Breast epithelium (tissue), 4 donors: ENCODE measurements at regions of chr1 and their contacts with region 1.

Region 1: GRCh38 chr1:150149271-150150132 is at the start of gene PLEKHO1:
- DNase-seq: peak; percentile 71 to 79
- H3K4me3 ChIP-seq: peak within 1 kb of the TSS; percentile 78 to 97 (median 93)
- H3K27ac ChIP-seq: peak within 1 kb of the TSS; percentile 91 to 96
- H3K4me1 ChIP-seq: peaks cover 0 to 5% of the 10 kb centered on the region in 2 donors
- H3K27me3 ChIP-seq: no peaks in the 10 kb centered on the region
- CTCF ChIP-seq: no peak
- POLR2A ChIP-seq: no peak
- total RNA-seq, gene PLEKHO1: 20.8 to 58.0 (median 27.5) TPM

Region 2: GRCh38 chr1:150010393-150011115 is 138.9 kb before region 1 on chr1 and contains the start of gene OTUD7B:
- intact Hi-C with region 1: no loop called
- DNase-seq: peak; percentile 73 to 89
- H3K4me3 ChIP-seq: peak within 1 kb of the TSS; percentile 82 to 91 (median 85)
- H3K27ac ChIP-seq: peak within 1 kb of the TSS; percentile 96 to 98
- H3K4me1 ChIP-seq: peaks cover 0 to 8% of the 10 kb centered on the region in 2 donors
- H3K27me3 ChIP-seq: no peaks in the 10 kb centered on the region
- CTCF ChIP-seq: peak in 2 of 3 donors; percentile 3 to 25
- POLR2A ChIP-seq: peak; percentile 42
- total RNA-seq, gene OTUD7B: 22.0 to 32.8 (median 28.1) TPM

Region 3: DNA sequence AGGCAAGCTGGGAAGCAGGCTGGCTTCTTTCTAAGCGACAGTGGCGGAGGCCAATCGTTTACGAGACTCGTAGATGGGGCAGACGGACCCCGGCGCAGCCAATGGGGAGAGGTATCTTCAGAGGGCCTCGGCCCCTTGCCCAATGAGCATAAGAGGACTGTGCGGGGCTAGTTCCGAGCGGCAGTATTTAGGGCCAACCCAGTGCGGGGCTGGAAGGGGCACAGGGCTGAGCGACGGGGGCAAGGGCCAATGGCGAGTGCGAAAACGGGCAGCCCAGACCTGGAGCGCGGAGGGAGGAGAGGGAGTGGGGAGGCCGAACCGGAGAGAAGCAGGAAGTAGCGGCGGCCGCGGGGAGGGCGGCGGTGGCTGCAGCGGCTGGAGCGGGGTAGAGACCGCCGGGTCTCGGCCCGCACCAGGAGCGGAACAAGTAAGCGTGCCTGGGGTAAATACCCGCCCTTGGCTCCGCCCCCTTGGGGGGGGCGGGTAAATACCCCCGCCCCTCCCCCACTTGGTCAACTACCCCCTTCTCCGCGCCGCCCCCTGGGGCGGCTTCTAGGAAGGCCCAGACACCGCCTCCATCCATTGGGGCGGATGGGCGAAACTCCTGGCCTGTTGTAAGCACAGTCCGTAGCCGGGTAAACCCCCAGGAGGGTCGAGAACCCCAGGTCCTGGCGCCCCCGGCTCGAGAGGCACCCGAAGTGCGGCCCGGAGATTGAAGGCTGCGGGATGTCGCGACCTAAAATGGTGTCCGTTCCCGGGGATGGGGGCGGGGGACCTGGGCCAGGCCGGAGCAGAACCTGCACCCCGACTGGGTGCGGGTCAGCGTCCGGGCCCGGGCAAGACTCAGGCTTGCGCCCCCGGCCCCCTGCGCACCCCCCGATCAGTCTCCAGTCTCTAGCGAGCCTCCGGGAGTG is 1132.7 kb after region 1 on chr1 and contains the start of gene ZNF687:
- intact Hi-C with region 1: loop called (anchors 5 kb)
- DNase-seq: peak; percentile 100
- H3K4me3 ChIP-seq: peak within 1 kb of the TSS; percentile 76 to 92 (median 79)
- H3K27ac ChIP-seq: peak within 1 kb of the TSS; percentile 99 to 100
- H3K4me1 ChIP-seq: peaks cover 7 to 11% of the 10 kb centered on the region in 2 donors
- H3K27me3 ChIP-seq: no peaks in the 10 kb centered on the region
- CTCF ChIP-seq: no peak
- POLR2A ChIP-seq: peak; percentile 72
- total RNA-seq, gene ZNF687: 20.6 to 31.6 (median 25.9) TPM